Psoas muscle (tissue), 8 donors: ENCODE measurements at regions of chr9 and their contacts with region 1.

Region 1: GRCh38 chr9:133103183-133103986 is 17.7 kb downstream of the RALGDS start:
- DNase-seq: peak; percentile 76 to 88
- ATAC-seq: peak; percentile 79 to 90 (median 83)
- H3K4me3 ChIP-seq: no peak overlapping the region
- H3K27ac ChIP-seq: no peak overlapping the region
- H3K4me1 ChIP-seq: no peaks in the 10 kb centered on the region
- H3K27me3 ChIP-seq: no peaks in the 10 kb centered on the region
- CTCF ChIP-seq: peak; percentile 99

Region 2: DNA sequence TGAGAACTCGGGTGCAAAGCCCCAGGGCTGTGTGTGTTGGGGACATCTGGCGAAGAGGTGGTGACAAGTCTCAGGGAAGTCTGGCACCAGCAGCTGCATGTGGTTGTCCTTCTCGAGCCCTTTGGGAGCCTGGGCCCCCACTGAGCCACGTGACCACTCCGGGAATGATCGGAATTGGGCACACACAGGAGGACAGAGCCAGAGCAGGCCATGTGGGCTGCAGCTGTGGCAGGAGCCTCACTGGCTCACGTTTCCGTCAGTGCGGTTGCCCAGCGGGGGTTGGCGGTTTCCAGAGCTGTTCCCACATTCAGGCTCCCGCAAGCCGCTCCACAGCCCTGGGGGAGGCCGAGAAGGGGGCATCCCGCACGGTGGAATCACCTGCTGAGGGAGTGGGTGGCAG is 48.4 kb before region 1 on chr9:
- intact Hi-C with region 1: loop called in 1 of 2 experiments (anchors 5 kb)
- DNase-seq: peak; percentile 72 to 85
- ATAC-seq: peak; percentile 93 to 95 (median 95)
- H3K4me3 ChIP-seq: no peak overlapping the region
- H3K27ac ChIP-seq: peak overlapping the region; percentile 64
- H3K4me1 ChIP-seq: peaks cover 8% of the 10 kb centered on the region
- H3K27me3 ChIP-seq: no peaks in the 10 kb centered on the region
- CTCF ChIP-seq: no peak